ENCODE measurements at regions of chr15 and their contacts with region 1.

Region 1: DNA sequence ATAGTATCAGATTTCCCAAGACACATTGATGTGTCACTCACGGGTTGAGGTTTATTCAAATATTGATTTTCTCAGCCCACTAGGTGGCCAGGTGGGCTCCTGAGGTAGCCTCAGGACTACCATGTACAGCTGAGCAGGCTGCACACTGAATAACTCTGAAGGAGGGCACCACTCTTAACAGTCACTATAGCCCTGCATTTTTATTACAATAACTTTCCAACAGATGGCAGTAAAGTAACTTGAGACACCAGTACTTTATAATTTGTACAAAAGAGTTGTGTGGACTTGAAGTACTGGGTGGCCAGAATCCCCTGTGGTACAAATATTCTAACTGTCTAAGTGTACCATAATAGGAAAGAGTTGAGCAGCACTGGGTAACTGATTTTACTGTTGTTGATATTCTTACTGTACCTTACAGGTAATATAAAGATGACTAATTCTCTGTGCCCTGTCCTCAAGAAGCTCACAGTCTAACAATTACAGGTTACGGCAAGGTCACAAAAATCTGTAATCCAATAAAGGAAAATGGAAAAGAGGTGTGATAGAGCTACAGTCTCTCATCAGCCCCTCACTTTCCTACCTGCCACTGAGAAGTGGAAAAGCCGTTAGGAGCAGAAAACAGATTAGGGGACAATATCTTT is 76.0 kb downstream of the ETFA start:
- DNase-seq: no peak
- ATAC-seq: peak; percentile 63 to 71
- H3K4me3 ChIP-seq: no peak overlapping the region
- H3K27ac ChIP-seq: no peak overlapping the region
- H3K4me1 ChIP-seq: peaks cover 2% of the 10 kb centered on the region
- H3K27me3 ChIP-seq: no peaks in the 10 kb centered on the region

Region 2: DNA sequence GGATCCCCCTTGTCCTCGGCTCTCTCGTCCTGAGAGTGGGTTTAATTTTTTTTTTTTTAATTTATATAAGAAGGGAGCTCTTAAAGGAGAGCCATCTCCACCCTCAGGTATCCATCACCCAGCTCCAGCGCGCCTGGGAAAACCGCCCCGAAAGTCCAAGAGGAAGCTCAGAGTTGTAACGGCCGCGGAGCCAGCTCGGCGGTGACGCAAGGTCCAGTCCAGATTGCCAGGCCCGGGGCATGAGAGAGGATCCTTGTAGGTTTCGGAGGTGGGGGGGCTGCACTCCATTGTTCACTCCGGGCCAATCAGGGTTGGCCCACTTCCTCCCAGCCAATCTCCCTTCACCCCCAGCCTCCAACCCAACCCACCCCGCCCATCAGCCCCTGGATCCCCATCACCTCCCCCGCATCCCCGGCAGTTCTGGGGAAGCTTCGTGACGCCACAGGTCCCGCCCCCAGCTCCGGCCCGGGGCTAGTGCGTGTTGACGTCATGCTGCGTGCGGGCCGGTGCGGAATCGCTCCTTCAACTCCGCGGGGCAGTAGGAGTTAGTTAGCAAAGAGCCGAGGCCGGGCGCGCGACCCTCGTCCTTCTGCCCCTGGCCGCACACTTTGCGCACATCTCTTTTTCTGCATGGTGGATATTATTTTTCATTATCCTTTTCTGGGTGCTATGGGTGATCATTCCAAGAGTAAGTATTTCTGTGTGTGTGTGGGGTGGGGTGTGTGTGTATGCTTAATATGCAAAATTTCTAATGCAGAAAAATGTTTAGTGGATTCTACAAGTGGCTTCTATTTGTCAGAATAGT is 101.2 kb after region 1 on chr15 and contains the start of gene ISL2:
- intact Hi-C with region 1: loop called in 1 of 4 experiments (anchors 10 kb)
- DNase-seq: peak; percentile 53 to 78 (median 69)
- ATAC-seq: peak in 1 of 2 donors; percentile 19
- H3K4me3 ChIP-seq: peak within 1 kb of the TSS; percentile 12
- H3K27ac ChIP-seq: no peak within 1 kb of the TSS
- H3K4me1 ChIP-seq: peaks cover 5% of the 10 kb centered on the region
- H3K27me3 ChIP-seq: no peaks in the 10 kb centered on the region
- total RNA-seq, gene ISL2: not detected

Region 3: GRCh38 chr15:76431971-76432370 is 196.7 kb after region 1 on chr15:
- intact Hi-C with region 1: no loop called
- DNase-seq: no peak
- ATAC-seq: no peak
- H3K4me3 ChIP-seq: no peak overlapping the region
- H3K27ac ChIP-seq: no peak overlapping the region
- H3K4me1 ChIP-seq: no peaks in the 10 kb centered on the region
- H3K27me3 ChIP-seq: no peaks in the 10 kb centered on the region